ENCODE measurements at regions of chr3 and their contacts with region 1.

Region 1: GRCh38 chr3:113912552-113913236 is 35.1 kb upstream of the ZDHHC23 start:
- DNase-seq: peak; percentile 74
- H3K4me3 ChIP-seq: no peak overlapping the region
- H3K27ac ChIP-seq: no peak overlapping the region
- H3K4me1 ChIP-seq: no peaks in the 10 kb centered on the region
- CTCF ChIP-seq: peak; percentile 85

Region 2: GRCh38 chr3:113736548-113737089 is 176.1 kb before region 1 on chr3:
- CTCF ChIA-PET with region 1: no interaction called
- POLR2A ChIA-PET with region 1: interaction called, 3 read pairs
- intact Hi-C with region 1: loop called (anchors 1 kb)
- DNase-seq: peak; percentile 77
- H3K4me3 ChIP-seq: no peak overlapping the region
- H3K27ac ChIP-seq: peak overlapping the region; percentile 59
- H3K4me1 ChIP-seq: peaks cover 49% of the 10 kb centered on the region
- CTCF ChIP-seq: peak; percentile 88

Region 3: DNA sequence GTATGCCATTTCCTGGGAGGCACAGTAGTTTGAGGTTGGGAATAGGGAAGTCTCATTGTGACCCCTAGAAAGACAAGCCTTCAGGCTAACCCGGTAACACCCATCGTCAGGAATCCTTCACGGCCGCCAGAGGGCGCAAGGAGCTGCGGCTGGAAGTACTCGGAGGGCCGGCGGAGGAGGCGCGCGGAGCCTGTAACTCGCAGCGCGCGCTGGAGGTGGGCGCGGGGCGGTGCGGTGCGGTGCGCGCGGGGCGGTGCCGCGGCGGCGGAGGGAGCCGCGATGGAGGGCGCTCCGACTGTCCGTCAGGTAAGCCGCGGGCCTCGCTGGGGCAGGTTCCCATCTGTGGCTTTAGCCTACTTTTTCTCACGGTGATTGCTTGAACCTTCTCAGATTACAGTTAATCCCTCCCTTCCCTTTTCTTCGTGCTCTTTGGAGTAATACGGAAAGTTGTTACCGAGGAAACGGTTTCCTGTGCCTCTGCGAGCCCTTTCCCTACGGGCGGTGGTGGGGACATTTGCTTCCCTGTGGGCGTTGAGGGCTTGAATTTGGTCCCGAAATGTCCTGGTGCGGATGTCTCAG is 74.0 kb before region 1 on chr3 and contains the start of gene GRAMD1C:
- CTCF ChIA-PET with region 1: no interaction called
- POLR2A ChIA-PET with region 1: interaction called, 3 read pairs
- intact Hi-C with region 1: loop called (anchors 2 kb)
- DNase-seq: peak; percentile 91
- H3K4me3 ChIP-seq: peak within 1 kb of the TSS; percentile 70
- H3K27ac ChIP-seq: no peak within 1 kb of the TSS
- H3K4me1 ChIP-seq: no peaks in the 10 kb centered on the region
- CTCF ChIP-seq: peak; percentile 89
- total RNA-seq, gene GRAMD1C: 4.1 and 6.1 TPM in 2 replicates

Region 4: DNA sequence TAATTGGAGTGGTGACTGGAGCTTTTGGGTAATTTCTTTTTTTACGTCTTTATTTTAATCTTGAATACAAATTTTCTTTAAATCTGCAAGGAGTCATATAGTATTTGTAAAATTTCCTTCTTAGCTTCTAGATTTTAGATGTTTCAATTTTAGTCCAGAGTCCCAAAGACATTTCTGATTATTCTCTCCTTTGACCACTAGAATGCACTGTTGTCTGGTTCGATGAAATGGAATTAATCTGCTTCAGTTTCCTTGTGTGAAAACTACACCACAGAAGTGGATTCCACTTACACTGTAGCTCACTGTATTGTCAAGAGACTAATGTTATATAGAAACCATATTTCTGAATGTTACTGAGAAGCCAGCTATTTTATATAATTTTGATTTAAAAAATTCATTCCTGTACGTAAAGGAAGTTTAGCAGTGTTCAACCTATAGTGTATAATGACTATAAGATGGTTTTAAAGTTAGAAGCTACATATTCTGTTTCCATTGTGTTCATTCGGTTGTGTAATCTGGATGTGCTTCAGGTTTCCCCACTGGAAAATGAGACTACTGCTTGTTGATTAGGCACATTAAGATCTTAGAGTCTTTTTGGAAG is 68.0 kb before region 1 on chr3:
- CTCF ChIA-PET with region 1: no interaction called
- POLR2A ChIA-PET with region 1: interaction called, 5 read pairs
- intact Hi-C with region 1: loop called (anchors 1 kb)
- DNase-seq: peak; percentile 58
- H3K4me3 ChIP-seq: no peak overlapping the region
- H3K27ac ChIP-seq: no peak overlapping the region
- H3K4me1 ChIP-seq: no peaks in the 10 kb centered on the region
- CTCF ChIP-seq: peak; percentile 94